Psoas muscle (tissue), 8 donors: ENCODE measurements at regions of chr17 and their contacts with region 1.

Region 1: DNA sequence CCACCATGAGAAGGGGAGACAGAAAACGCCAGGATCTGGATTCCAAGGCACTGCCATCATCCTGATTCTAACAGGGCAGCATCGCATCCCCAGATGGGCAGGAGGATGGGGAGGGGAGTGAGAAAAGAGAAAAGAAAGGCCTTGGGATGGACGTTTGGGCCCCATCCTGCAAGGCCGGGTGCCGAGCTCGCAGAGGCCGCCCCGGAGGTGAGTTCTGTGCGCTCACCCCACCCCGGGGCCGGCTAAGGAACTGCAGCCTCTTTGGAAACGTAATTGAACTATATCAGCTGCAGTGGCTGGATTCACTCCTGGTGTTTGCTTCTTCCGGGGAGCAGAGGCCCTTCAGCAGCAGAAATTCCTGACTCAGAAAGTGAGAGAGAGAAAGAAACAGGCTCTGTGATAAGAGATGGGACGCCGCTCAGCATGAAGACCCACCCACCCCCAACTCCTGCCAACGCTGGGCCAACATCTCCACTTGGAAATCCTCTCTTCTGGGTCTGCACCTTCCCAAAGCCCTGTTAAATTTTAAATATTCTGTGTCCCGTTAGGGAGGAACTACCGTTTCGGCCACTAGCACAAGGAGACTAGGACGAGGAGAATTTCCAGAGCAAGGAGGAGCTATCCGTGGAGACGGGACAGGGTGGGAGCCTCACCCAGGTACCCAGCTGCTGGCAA is 8.5 kb upstream of the SSTR2 start:
- DNase-seq: peak; percentile 68 to 71
- ATAC-seq: peak; percentile 73 to 85 (median 80)
- H3K4me3 ChIP-seq: no peak overlapping the region
- H3K27ac ChIP-seq: no peak overlapping the region
- H3K4me1 ChIP-seq: no peaks in the 10 kb centered on the region
- H3K27me3 ChIP-seq: peaks cover 0 to 7% (median under 1%) of the 10 kb centered on the region in 3 donors
- CTCF ChIP-seq: peak; percentile 73

Region 2: DNA sequence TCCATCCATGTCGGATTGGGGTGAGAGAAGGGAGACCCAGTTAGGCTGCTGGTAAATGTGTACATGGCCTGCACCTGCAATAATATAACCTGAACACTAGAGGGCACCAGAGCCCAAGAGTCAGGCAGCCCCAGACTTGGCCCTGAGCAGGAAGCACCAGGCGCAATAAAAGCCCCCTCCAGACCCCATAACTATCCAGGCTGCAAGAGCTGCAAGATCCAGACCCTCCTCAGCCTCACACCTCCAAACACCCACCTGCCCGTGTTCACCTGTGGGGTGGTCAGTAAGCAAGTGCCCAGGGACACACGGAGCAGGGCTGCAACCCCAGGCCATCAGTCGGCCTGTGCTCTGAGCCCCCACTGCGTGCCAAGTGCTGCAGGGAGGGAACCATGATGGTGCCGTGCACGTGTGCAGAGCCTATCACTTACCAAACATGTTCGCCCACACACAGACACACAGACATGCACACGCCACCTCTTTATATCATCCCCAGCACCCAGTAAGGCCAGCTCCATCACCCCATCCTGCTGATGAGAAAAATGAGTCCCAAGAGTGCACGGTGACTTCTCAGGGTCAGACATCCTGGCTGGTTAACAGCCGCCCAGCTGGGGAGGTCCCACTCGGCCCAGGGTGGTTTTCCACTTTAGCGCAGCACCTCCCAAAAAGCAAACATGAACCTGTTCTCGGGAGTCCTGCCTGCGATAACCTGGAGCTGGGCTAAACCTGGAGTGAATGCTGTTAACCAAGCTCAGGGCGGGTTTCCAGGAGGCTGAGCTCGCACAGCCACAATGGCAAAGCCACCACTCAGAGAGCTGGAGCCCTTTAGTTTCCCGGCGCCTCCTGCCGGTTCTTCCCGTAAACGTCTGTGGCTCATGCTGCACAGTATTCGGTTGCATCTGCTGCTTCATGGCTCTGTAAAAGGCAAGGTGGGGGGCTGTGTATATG is 595.7 kb before region 1 on chr17:
- intact Hi-C with region 1: loop called in 1 of 2 experiments (anchors 10 kb)
- DNase-seq: no peak
- ATAC-seq: no peak
- H3K4me3 ChIP-seq: no peak overlapping the region
- H3K27ac ChIP-seq: no peak overlapping the region
- H3K4me1 ChIP-seq: no peaks in the 10 kb centered on the region
- H3K27me3 ChIP-seq: peaks cover 0 to 2% (median 0%) of the 10 kb centered on the region in 3 donors
- CTCF ChIP-seq: peak; percentile 57

Region 3: DNA sequence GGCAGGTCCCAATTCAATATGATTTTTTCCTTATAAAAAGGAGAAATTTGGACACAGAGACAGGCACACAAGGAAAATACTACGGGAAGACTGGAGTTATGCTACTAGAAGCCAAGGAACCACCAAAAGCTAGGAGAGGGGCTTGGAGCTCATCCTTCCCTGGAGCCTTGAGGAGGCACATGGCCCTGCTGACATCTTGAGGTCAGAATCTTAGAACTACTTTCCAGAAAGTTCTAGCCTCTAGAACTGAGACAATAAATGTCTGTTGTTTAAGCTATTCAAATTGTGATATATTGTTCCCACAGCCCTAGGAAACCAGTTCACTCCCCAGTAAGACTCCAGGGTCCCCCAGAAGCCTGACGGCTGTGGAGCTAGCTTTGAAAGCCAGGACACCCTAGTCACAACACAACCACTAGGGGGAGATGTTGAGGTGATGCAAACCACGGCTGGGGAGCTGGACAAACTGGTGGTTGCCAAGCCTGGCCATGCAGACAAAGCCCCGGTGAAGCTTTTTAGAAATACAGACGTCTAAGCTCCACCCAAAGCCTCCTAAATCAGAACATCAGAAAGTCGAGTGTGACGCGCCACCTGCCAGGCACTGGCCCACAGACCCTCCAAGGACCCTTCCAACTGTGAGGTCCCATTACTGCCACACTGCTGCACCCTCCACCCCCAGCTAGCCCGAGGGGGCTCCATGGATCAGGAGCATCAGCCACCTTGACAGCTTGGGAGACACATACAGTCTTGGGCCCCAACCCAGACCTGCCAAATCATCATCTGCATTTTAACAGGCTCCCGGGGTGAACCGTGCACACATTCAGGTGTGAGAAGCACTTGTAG is 170.2 kb before region 1 on chr17:
- intact Hi-C with region 1: loop called (anchors 2 to 5 kb)
- DNase-seq: peak; percentile 36 to 56
- ATAC-seq: peak; percentile 68 to 89 (median 80)
- H3K4me3 ChIP-seq: no peak overlapping the region
- H3K27ac ChIP-seq: no peak overlapping the region
- H3K4me1 ChIP-seq: no peaks in the 10 kb centered on the region
- H3K27me3 ChIP-seq: no peaks in the 10 kb centered on the region
- CTCF ChIP-seq: peak; percentile 83

Region 4: GRCh38 chr17:73132085-73132492 is 24.2 kb before region 1 on chr17:
- intact Hi-C with region 1: no loop called
- DNase-seq: no peak
- ATAC-seq: no peak
- H3K4me3 ChIP-seq: no peak overlapping the region
- H3K27ac ChIP-seq: no peak overlapping the region
- H3K4me1 ChIP-seq: no peaks in the 10 kb centered on the region
- H3K27me3 ChIP-seq: no peaks in the 10 kb centered on the region
- CTCF ChIP-seq: no peak